ENCODE measurements at regions of chr5 and their contacts with region 1.

Region 1: GRCh38 chr5:114361724-114362196 is at the start of gene KCNN2:
- DNase-seq: peak; percentile 26
- ATAC-seq: peak; percentile 75
- H3K4me3 ChIP-seq: peak within 1 kb of the TSS; percentile 44; the same call in 1 of the 2 replicates
- H3K27ac ChIP-seq: no peak within 1 kb of the TSS
- H3K4me1 ChIP-seq: no peaks in the 10 kb centered on the region
- H3K27me3 ChIP-seq: peaks cover 0 to 18% of the 10 kb centered on the region in 2 experiments; a peak in 2 of 4 replicates
- CTCF ChIP-seq: no peak
- EP300 ChIP-seq: no peak
- POLR2A ChIP-seq: no peak
- RAD21 ChIP-seq: no peak
- polyA plus RNA-seq, gene KCNN2: 0.47 to 0.60 TPM

Region 2: GRCh38 chr5:113612060-113612496 is 749.7 kb before region 1 on chr5:
- CTCF ChIA-PET with region 1: interaction called, 5 read pairs
- POLR2A ChIA-PET with region 1: no interaction called
- RAD21 ChIA-PET with region 1: interaction called, 7 read pairs
- SMC1A ChIA-PET with region 1: interaction called, 6 read pairs
- in situ Hi-C with region 1: no loop called
- intact Hi-C with region 1: loop called (anchors 5 kb)
- DNase-seq: no peak
- ATAC-seq: peak; percentile 87
- H3K4me3 ChIP-seq: no peak overlapping the region
- H3K27ac ChIP-seq: no peak overlapping the region
- H3K4me1 ChIP-seq: no peaks in the 10 kb centered on the region
- H3K27me3 ChIP-seq: no peaks in the 10 kb centered on the region
- CTCF ChIP-seq: peak; percentile 36 to 77 (median 53); a peak in 4 of 6 replicates
- EP300 ChIP-seq: no peak
- POLR2A ChIP-seq: no peak
- RAD21 ChIP-seq: peak; percentile 81

Region 3: DNA sequence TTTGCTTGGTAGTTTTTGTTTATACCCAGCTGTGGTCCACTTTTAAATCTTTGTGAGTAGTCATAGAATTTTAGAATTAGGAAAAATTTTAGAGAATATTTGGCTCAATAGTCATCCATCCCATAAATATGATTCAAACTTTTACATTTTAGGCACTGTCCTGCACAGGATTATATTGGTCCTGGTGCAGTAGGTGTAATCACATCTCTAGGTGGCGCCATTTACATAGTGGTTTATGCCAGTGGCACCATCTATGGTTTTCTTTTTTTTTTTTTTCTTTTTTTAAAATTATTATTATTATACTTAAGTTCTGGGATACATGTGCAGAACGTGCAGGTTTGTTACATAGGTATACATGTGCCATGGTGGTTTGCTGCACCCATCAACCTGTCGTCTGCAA is 260.6 kb before region 1 on chr5:
- CTCF ChIA-PET with region 1: no interaction called
- POLR2A ChIA-PET with region 1: no interaction called
- RAD21 ChIA-PET with region 1: no interaction called
- SMC1A ChIA-PET with region 1: no interaction called
- in situ Hi-C with region 1: no loop called
- intact Hi-C with region 1: loop called (anchors 2 kb)
- DNase-seq: no peak
- ATAC-seq: peak; percentile 86
- H3K4me3 ChIP-seq: no peak overlapping the region
- H3K27ac ChIP-seq: no peak overlapping the region
- H3K4me1 ChIP-seq: no peaks in the 10 kb centered on the region
- H3K27me3 ChIP-seq: no peaks in the 10 kb centered on the region
- CTCF ChIP-seq: peak; percentile 42 to 54 (median 47); a peak in 5 of 6 replicates
- EP300 ChIP-seq: no peak
- POLR2A ChIP-seq: no peak
- RAD21 ChIP-seq: peak; percentile 70

Region 4: DNA sequence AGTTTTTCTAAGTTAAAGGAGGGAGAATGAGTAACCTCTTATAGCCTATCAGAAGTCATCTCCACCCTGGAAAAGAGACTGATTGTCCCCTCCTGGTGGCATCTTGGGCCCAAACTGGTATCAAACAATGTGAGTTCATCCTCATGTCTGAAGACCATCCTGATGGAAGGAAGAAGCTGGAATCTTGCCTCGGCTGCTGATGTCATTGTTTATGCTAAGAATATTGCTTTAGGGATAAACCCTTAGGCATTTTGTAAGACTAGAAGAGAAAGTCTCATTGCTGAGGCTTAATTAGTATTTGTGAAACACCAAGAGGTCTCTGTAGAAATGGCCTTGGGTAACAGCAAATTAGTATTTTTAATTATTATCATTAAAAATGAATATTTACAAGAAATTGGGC is 65.6 kb before region 1 on chr5:
- CTCF ChIA-PET with region 1: no interaction called
- POLR2A ChIA-PET with region 1: no interaction called
- RAD21 ChIA-PET with region 1: no interaction called
- SMC1A ChIA-PET with region 1: no interaction called
- in situ Hi-C with region 1: no loop called
- intact Hi-C with region 1: no loop called
- DNase-seq: no peak
- ATAC-seq: no peak
- H3K4me3 ChIP-seq: no peak overlapping the region
- H3K27ac ChIP-seq: no peak overlapping the region
- H3K4me1 ChIP-seq: no peaks in the 10 kb centered on the region
- H3K27me3 ChIP-seq: no peaks in the 10 kb centered on the region
- CTCF ChIP-seq: no peak
- EP300 ChIP-seq: no peak
- POLR2A ChIP-seq: no peak
- RAD21 ChIP-seq: no peak

Region 5: GRCh38 chr5:114418176-114419066 is 56.7 kb after region 1 on chr5:
- CTCF ChIA-PET with region 1: interaction called, 12 read pairs
- POLR2A ChIA-PET with region 1: interaction called, 4 read pairs
- RAD21 ChIA-PET with region 1: interaction called, 45 read pairs
- SMC1A ChIA-PET with region 1: interaction called, 55 read pairs
- in situ Hi-C with region 1: no loop called
- intact Hi-C with region 1: loop called (anchors 1 kb)
- DNase-seq: peak; percentile 56
- ATAC-seq: peak; percentile 91
- H3K4me3 ChIP-seq: 0 out of 2 replicates have a peak overlapping the region, but pooled peaks have one; percentile 3
- H3K27ac ChIP-seq: peak overlapping the region; percentile 43; the same call in 1 of the 2 replicates
- H3K4me1 ChIP-seq: no peaks in the 10 kb centered on the region
- H3K27me3 ChIP-seq: no peaks in the 10 kb centered on the region
- CTCF ChIP-seq: no peak
- EP300 ChIP-seq: peak; percentile 94 to 96
- POLR2A ChIP-seq: no peak
- RAD21 ChIP-seq: peak; percentile 24; the same call in 1 of the 2 replicates

Region 6: GRCh38 chr5:114435885-114436299 is 74.1 kb after region 1 on chr5:
- CTCF ChIA-PET with region 1: interaction called, 27 read pairs
- POLR2A ChIA-PET with region 1: interaction called, 6 read pairs
- RAD21 ChIA-PET with region 1: interaction called, 102 read pairs
- SMC1A ChIA-PET with region 1: interaction called, 142 read pairs
- in situ Hi-C with region 1: no loop called
- intact Hi-C with region 1: no loop called
- DNase-seq: peak; percentile 73
- ATAC-seq: peak; percentile 84
- H3K4me3 ChIP-seq: no peak overlapping the region
- H3K27ac ChIP-seq: no peak overlapping the region
- H3K4me1 ChIP-seq: no peaks in the 10 kb centered on the region; the same call in 1 of the 2 replicates
- H3K27me3 ChIP-seq: no peaks in the 10 kb centered on the region
- CTCF ChIP-seq: no peak
- EP300 ChIP-seq: peak; percentile 69 to 82; a peak in 2 of 4 replicates
- POLR2A ChIP-seq: no peak
- RAD21 ChIP-seq: no peak

Region 7: DNA sequence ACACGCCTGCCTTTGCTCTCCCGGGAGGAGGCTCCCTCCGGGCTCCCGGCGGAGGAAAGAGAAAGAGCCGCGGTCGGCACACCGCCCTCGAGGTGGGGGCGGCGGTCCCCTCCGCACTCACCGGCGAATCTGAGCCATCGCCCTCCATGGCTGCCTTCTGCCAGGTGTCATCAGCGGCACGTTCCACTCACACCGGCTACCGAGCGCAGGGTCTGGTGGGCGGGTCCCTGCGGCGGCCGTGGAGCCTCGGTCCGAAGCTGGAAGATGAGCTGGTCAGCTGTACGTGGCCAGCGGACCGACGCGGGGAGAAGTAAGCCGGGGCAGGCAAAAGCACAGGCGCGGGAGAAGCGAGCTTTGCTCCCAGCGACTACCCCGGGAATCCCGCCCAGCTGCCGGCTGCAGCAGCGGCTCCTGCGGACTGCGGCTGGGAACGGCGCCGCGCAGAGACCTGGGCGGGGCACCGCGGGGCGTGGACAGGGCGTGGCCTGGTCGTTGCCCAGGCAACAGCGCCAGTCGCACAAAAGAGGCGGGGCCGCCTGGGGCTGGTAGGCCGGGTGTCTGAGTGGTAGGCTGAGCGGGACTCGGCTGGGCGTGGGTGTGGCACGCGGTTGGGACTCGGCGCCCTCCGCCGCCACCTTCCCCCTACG is 807.9 kb after region 1 on chr5 and contains the start of gene TRIM36:
- CTCF ChIA-PET with region 1: no interaction called
- POLR2A ChIA-PET with region 1: no interaction called
- RAD21 ChIA-PET with region 1: no interaction called
- SMC1A ChIA-PET with region 1: no interaction called
- in situ Hi-C with region 1: no loop called
- intact Hi-C with region 1: loop called (anchors 10 kb)
- DNase-seq: peak; percentile 50
- ATAC-seq: peak; percentile 99
- H3K4me3 ChIP-seq: peak within 1 kb of the TSS; percentile 86
- H3K27ac ChIP-seq: no peak within 1 kb of the TSS
- H3K4me1 ChIP-seq: no peaks in the 10 kb centered on the region
- H3K27me3 ChIP-seq: peaks cover 2 to 25% of the 10 kb centered on the region in 2 experiments
- CTCF ChIP-seq: peak; percentile 13 to 36 (median 26); a peak in 4 of 6 replicates
- EP300 ChIP-seq: no peak
- POLR2A ChIP-seq: peak; percentile 48; the same call in 1 of the 2 replicates
- RAD21 ChIP-seq: no peak
- polyA plus RNA-seq, gene TRIM36: not detected

Measured in GM12878 (cell line).